ENCODE measurements at regions of chr2 and their contacts with region 1.

Region 1: GRCh38 chr2:43219383-43220228 is 6.8 kb downstream of the ZFP36L2 start:
- DNase-seq: peak; percentile 80
- ATAC-seq: peak; percentile 54
- H3K4me3 ChIP-seq: peak overlapping the region; percentile 42
- H3K27ac ChIP-seq: peak overlapping the region; percentile 98
- H3K4me1 ChIP-seq: peaks cover 22% of the 10 kb centered on the region
- H3K27me3 ChIP-seq: no peaks in the 10 kb centered on the region
- CTCF ChIP-seq: 0 out of 2 replicates have a peak, but pooled peaks have one; percentile 2
- POLR2A ChIP-seq: no peak
- RAD21 ChIP-seq: no peak

Region 2: DNA sequence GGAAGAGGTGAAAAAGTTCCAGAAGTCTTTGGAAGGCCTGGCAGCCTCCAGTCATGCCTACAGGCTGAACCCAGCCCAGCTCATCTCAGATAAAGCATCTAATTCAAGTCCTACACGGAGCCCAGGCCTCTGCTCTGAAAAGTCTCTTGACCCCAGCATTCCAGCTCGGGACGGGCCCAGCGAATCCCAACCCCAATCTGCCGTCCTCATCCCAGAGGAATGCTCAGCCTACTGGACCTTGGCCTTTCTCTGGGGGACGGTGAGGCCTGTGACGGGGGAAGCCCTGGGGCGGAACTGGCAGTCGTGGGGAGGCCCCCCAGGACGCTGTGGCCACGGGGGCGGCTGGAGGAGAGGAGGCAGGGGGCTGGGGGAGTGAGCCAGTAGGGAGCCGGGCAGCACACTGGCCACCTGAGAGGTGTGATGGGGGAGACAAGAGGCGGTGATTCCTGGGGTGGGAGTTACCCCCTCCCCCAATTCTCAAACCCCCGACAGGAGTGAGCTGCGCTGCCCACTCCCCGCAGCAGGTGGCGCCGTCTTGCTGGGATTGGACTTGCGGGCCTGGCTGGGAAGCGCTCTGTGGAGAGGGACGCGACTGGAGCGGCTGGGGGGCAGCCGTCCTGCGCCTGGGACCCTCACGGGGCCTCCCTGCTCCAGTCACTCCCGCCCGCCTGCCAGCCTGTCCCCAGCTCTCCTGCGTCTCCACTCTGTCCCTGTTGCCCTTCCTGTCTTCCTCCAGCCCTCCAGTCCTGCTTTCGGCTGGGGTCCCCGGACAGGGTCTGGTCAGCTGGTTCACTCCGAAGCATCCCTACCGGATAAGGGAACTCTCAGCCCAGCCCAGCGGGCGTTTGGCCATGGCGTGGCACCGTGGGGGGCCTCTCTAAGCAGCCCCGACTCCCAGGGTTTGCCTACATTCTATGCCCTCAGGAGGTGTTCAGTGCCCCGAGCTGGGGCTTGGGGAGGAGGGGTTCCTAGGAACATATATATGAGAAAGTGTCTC is 244.6 kb before region 1 on chr2:
- CTCF ChIA-PET with region 1: interaction called, 8 read pairs
- POLR2A ChIA-PET with region 1: interaction called, 6 read pairs
- dilution Hi-C with region 1: no loop called
- in situ Hi-C with region 1: loop called (anchors 10 kb)
- intact Hi-C with region 1: loop called (anchors 1 kb)
- DNase-seq: peak; percentile 63
- ATAC-seq: peak; percentile 91
- H3K4me3 ChIP-seq: peak overlapping the region; percentile 15; the same call in 1 of the 2 replicates
- H3K27ac ChIP-seq: peak overlapping the region; percentile 79
- H3K4me1 ChIP-seq: peaks cover 20% of the 10 kb centered on the region
- H3K27me3 ChIP-seq: no peaks in the 10 kb centered on the region
- CTCF ChIP-seq: peak; percentile 88
- POLR2A ChIP-seq: peak; percentile 54; the same call in 1 of the 2 replicates
- RAD21 ChIP-seq: peak; percentile 97

Region 3: GRCh38 chr2:43075054-43075593 is 144.5 kb before region 1 on chr2:
- CTCF ChIA-PET with region 1: no interaction called
- POLR2A ChIA-PET with region 1: no interaction called
- dilution Hi-C with region 1: no loop called
- in situ Hi-C with region 1: loop called (anchors 10 kb)
- intact Hi-C with region 1: loop called (anchors 1 kb)
- DNase-seq: peak; percentile 99
- ATAC-seq: peak; percentile 86
- H3K4me3 ChIP-seq: no peak overlapping the region
- H3K27ac ChIP-seq: peak overlapping the region; percentile 100
- H3K4me1 ChIP-seq: peaks cover 49% of the 10 kb centered on the region
- H3K27me3 ChIP-seq: no peaks in the 10 kb centered on the region
- CTCF ChIP-seq: peak; percentile 33
- POLR2A ChIP-seq: no peak; the same call in 1 of the 2 replicates
- RAD21 ChIP-seq: peak; percentile 49

Region 4: GRCh38 chr2:43105586-43106558 is 113.7 kb before region 1 on chr2:
- CTCF ChIA-PET with region 1: no interaction called
- POLR2A ChIA-PET with region 1: interaction called, 6 read pairs
- dilution Hi-C with region 1: no loop called
- in situ Hi-C with region 1: no loop called
- intact Hi-C with region 1: loop called (anchors 1 kb)
- DNase-seq: peak; percentile 73
- ATAC-seq: peak; percentile 59
- H3K4me3 ChIP-seq: no peak overlapping the region
- H3K27ac ChIP-seq: peak overlapping the region; percentile 94
- H3K4me1 ChIP-seq: peaks cover 63% of the 10 kb centered on the region
- H3K27me3 ChIP-seq: no peaks in the 10 kb centered on the region
- CTCF ChIP-seq: peak; percentile 42
- POLR2A ChIP-seq: no peak
- RAD21 ChIP-seq: peak; percentile 38

Region 5: DNA sequence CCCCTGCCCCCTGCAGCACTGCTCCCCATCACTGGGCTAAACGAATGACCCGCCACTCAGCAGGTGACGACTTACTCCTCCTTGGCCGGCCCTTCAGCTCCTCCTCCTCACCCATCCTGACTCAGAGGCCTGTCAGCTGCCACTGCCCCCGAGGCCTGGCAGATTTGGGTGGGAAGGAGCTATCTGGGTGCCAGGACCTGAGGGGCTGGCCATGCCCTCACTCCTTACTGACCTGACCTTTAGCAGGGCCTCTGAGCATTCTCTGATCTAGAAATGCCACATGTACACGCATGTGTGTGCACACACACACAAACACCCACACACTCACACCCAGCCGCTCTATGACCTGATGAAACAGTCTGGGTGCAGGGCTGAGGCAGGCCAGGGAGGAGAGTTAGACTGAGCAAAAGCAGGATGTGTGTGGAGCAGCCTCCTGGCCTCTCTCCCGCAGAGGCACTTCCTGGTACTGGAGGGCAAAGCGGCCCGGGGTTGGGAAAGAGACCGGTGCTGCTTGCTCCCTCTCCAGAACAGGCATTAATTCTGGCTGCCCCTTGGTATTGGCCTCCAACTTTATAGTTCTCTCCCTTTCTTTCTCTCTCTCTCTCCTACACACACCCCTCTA is 61.2 kb before region 1 on chr2:
- CTCF ChIA-PET with region 1: no interaction called
- POLR2A ChIA-PET with region 1: no interaction called
- dilution Hi-C with region 1: no loop called
- in situ Hi-C with region 1: no loop called
- intact Hi-C with region 1: loop called (anchors 2 kb)
- DNase-seq: peak; percentile 75
- ATAC-seq: peak; percentile 79
- H3K4me3 ChIP-seq: no peak overlapping the region
- H3K27ac ChIP-seq: peak overlapping the region; percentile 64
- H3K4me1 ChIP-seq: peaks cover 18% of the 10 kb centered on the region
- H3K27me3 ChIP-seq: no peaks in the 10 kb centered on the region
- CTCF ChIP-seq: no peak
- POLR2A ChIP-seq: no peak
- RAD21 ChIP-seq: no peak; the same call in 1 of the 2 replicates